ENCODE measurements at regions of chr12 and their contacts with region 1.

Region 1: DNA sequence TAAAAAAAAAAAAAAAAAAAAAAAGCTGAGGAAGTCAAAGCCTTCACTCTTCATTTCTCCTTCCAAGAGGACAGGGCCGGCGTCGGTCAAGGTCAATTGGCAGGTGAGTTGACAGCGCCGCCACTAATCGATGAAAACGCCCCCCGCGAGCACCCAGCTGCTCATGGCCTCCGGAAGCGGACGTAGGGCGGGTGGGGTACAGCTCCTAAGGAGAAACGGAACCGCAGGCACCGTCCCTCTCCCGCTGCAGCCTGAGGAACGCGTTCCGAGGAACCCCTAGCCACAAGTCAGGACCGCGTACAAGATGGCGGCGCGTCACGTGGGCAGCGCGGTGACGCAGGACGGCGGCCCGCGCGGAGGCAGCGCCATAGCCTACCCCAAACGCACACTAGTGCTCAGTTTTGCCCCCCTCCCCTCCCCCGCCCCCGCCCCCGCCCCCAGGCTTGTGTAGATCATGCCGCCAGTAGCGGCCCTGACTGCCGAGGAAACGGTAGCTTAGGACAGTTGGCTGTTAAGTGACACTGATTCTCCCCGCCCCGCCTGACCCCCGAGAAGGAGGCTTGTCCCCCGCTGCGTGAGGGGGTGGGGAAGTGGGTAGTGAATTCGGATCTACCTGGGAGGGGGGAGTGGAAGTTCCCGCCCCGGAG is at the start of gene ATF1:
- DNase-seq: peak; percentile 55
- H3K4me3 ChIP-seq: peak within 1 kb of the TSS; percentile 92
- H3K27me3 ChIP-seq: no peaks in the 10 kb centered on the region
- CTCF ChIP-seq: no peak
- polyA plus RNA-seq, gene ATF1: 69.3 and 72.5 TPM in 2 replicates

Region 2: GRCh38 chr12:50313261-50313931 is 450.4 kb before region 1 on chr12:
- CTCF ChIA-PET with region 1: no interaction called
- POLR2A ChIA-PET with region 1: no interaction called
- DNase-seq: no peak
- H3K4me3 ChIP-seq: no peak overlapping the region
- H3K27me3 ChIP-seq: no peaks in the 10 kb centered on the region
- CTCF ChIP-seq: no peak

Region 3: GRCh38 chr12:50614167-50614759 is 149.5 kb before region 1 on chr12:
- CTCF ChIA-PET with region 1: no interaction called
- POLR2A ChIA-PET with region 1: no interaction called
- DNase-seq: no peak
- H3K4me3 ChIP-seq: no peak overlapping the region
- H3K27me3 ChIP-seq: no peaks in the 10 kb centered on the region
- CTCF ChIP-seq: no peak

Region 4: GRCh38 chr12:50775251-50775650 is 11.5 kb after region 1 on chr12:
- CTCF ChIA-PET with region 1: interaction called, 13 read pairs
- POLR2A ChIA-PET with region 1: interaction called, 6 read pairs
- DNase-seq: no peak
- H3K4me3 ChIP-seq: no peak overlapping the region
- H3K27me3 ChIP-seq: no peaks in the 10 kb centered on the region
- CTCF ChIP-seq: no peak

Region 5: GRCh38 chr12:50825372-50825838 is 61.6 kb after region 1 on chr12:
- CTCF ChIA-PET with region 1: interaction called, 21 read pairs
- POLR2A ChIA-PET with region 1: no interaction called
- DNase-seq: peak; percentile 41
- H3K4me3 ChIP-seq: no peak overlapping the region
- H3K27me3 ChIP-seq: no peaks in the 10 kb centered on the region
- CTCF ChIP-seq: peak; percentile 38; the same call in 1 of the 2 replicates

Measured in BJ (cell line).